Tibial artery (tissue), 4 donors: ENCODE measurements at regions of chr9 and their contacts with region 1.

Region 1: DNA sequence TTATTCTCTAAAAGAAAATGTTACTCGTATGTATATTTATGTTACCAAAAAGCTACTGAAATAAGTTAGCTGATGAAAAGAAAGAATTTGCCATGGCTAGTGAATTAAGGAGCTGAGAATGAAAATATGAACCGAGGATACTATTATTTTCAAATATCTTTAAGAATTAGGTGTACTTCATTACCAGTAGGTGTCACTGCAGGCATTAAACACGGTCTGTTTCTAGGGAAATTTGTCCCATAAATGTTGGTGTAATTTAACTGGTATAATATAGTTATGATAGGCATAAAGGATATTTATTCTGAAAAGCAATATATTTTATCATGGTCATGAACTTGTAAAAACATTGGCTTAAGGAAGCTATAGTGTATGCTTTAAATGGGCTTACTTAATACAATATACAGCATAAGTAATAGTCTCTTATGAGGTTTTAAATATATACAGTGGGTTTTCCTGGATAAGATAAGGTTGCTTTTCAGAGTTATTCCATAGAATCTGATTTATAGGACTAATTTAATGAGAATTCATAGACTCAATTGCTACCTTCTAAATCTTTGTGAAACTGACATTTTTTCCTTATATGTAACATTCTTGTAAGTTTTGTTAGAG is 72.4 kb upstream of the MPDZ start:
- DNase-seq: no peak
- H3K4me3 ChIP-seq: no peak overlapping the region
- H3K27ac ChIP-seq: no peak overlapping the region
- H3K4me1 ChIP-seq: peaks cover 0 to 6% (median 2%) of the 10 kb centered on the region in 4 donors
- H3K27me3 ChIP-seq: no peaks in the 10 kb centered on the region
- CTCF ChIP-seq: peak; percentile 59 to 66

Region 2: DNA sequence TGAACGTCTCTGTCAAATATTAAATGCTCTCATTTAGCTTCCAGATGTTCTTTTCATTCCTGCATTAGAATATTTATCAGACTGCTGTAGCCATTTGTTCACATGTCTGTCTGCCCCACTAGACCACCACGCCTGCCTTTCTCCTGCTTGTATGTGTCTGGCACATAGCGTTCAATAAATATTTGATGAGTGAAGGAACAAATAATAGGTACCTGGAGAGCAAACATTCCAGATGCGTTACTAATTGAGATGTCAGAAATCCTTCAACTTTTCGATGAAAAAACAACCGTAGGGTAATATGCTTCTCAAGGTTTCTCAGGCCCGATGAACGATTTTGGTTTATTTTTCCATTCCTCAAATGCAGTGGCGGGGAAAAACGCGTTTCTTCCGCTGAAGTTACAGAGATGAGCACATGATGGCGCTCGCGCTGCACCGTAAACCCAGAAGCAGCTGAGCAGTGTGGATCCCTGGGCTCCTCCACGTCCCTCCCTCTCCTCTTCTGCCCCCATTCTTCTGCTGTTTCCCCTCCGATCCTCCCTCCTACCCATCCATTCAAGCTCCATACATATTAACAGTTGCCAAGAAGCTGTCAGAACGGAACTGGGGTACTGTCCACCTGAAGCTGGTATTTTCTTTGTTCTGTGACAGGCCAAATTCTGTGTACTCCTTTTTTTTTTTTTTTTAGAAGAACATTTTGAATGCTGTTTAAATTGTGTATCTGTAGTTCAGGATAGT is 317.8 kb before region 1 on chr9:
- intact Hi-C with region 1: loop called (anchors 10 kb)
- DNase-seq: peak; percentile 56 to 76
- H3K4me3 ChIP-seq: peak overlapping the region; percentile 36 to 37
- H3K27ac ChIP-seq: no peak overlapping the region
- H3K4me1 ChIP-seq: peaks cover 0 to 7% (median 3%) of the 10 kb centered on the region in 4 donors
- H3K27me3 ChIP-seq: no peaks in the 10 kb centered on the region
- CTCF ChIP-seq: peak; percentile 78 to 82

Region 3: DNA sequence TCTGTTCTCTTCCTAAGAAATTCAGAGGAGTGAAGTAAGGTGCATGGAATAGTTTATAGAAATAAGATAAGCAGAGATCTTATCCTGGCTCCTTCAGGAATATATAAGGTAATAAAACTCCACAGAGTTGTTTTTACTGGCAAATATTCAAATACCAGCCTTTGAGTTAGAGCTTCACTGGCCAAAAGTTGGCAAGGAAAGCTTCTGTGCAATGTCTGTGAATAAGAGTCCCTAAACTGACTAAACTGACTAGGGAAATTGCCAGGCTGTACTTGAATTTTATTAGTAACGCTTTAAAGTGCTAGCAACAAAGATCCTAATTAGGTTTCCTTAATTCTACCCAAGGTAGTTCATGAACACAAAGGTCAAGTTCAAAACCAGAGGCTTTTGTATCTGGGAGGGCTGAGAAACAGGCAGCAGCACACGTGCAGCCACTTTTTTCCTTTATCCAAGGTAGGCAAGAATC is 58.7 kb after region 1 on chr9:
- intact Hi-C with region 1: no loop called
- DNase-seq: no peak
- H3K4me3 ChIP-seq: no peak overlapping the region
- H3K27ac ChIP-seq: peak overlapping the region; percentile 15 to 48
- H3K4me1 ChIP-seq: peaks cover 0 to 44% (median 21%) of the 10 kb centered on the region in 4 donors
- H3K27me3 ChIP-seq: no peaks in the 10 kb centered on the region
- CTCF ChIP-seq: no peak

Region 4: DNA sequence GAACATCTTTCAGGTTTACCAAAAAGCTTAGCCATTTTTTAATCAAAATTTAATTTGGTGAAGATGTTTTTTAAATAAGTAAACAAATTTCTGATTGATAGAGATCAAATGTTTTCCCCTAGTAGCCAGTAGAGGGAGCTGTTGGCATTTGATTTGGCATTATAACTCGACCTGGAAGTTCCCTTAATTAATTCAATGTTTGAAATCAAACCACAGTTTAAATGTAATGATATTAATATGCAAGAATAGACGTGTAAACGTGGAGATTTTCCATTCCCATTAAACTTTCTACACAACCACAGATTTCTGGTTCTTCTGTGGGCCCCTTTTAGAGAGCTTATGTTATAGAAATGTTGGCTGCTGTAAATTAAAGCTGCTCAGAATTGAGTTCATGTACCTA is 75.7 kb after region 1 on chr9:
- intact Hi-C with region 1: loop called (anchors 10 kb)
- DNase-seq: no peak
- H3K4me3 ChIP-seq: no peak overlapping the region
- H3K27ac ChIP-seq: no peak overlapping the region
- H3K4me1 ChIP-seq: no peaks in the 10 kb centered on the region
- H3K27me3 ChIP-seq: no peaks in the 10 kb centered on the region
- CTCF ChIP-seq: peak; percentile 71 to 80

Region 5: DNA sequence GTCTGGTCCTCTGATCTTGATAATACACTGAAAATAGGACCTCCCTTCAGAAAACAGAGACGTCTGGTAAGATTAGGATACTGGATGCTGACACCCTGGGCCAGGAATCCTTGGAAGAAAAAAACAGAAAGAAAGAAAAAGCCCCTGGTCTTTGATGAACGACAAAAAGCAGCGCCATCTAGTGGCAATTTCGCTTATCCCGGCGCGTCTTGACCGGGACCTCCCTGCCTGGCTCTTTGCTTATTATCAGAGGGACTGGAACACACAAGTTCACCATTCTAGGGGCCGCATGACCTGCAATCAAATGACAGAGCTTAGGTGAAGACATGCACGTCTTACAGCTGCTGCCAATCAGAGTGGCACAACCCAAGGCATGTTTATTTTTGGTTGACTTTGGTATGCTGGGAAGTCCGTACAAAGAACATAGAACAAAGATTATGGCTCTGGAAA is 1076.9 kb after region 1 on chr9:
- intact Hi-C with region 1: loop called (anchors 10 kb)
- DNase-seq: peak; percentile 69 to 78
- H3K4me3 ChIP-seq: no peak overlapping the region
- H3K27ac ChIP-seq: no peak overlapping the region
- H3K4me1 ChIP-seq: peaks cover 0 to 27% (median 12%) of the 10 kb centered on the region in 4 donors
- H3K27me3 ChIP-seq: no peaks in the 10 kb centered on the region
- CTCF ChIP-seq: peak; percentile 60 to 71